ENCODE measurements at regions of chr16 and their contacts with region 1.

Region 1: DNA sequence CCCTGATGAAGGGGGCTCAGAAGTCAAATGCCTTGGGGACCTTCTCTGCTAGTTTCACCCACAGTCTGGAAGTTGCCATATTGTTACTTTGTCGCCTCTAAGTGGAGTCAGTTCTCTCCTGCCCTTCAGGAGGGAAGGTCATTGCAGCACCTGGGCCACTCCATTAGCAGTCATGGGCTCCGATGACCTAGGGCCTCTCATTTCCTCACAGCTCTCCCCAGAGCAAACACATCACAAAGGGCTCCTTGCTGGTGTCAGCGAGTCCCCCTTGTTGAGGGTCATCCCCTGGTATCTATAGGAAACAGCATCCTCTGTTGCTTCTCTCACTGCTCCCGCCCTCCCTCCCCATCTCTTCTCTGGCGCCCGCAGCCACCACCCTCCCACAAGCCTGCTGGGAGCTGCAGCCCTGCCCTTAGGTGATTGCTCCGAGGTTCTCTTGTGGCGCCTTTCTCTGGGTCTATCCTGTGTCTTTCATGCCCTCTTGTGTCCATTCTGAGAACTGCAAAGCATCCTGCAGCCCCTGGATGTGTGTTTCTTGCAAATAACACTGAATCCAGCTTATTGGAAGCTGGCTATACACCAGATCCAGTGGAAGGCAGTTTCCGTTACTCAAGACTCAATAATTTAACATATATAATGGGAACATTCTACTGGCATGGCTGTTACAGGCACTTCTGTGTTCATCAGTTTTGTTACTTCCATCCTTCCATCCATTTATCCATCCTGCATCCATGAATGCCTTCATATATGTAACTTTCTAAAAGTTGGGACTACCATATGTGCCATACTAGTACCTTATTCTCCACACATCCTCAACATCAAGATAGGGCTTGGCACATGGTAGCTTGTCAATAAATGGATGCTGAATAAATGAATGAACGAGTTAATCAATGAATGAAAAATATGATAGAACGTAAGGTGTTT is 21.2 kb downstream of the PDILT start:
- DNase-seq: peak; percentile 60
- H3K4me3 Mint-ChIP-seq: no peak overlapping the region
- H3K27ac Mint-ChIP-seq: no peak overlapping the region
- H3K4me1 Mint-ChIP-seq: no peaks in the 10 kb centered on the region
- H3K27me3 Mint-ChIP-seq: peaks cover 3% of the 10 kb centered on the region

Region 2: GRCh38 chr16:19907161-19907992 is 476.0 kb before region 1 on chr16:
- CTCF ChIA-PET with region 1: interaction called, 125 read pairs
- POLR2A ChIA-PET with region 1: interaction called, 3 read pairs
- intact Hi-C with region 1: loop called (anchors 1 kb)
- DNase-seq: peak; percentile 81
- H3K4me3 Mint-ChIP-seq: no peak overlapping the region
- H3K27ac Mint-ChIP-seq: no peak overlapping the region
- H3K4me1 Mint-ChIP-seq: peaks cover 2% of the 10 kb centered on the region
- H3K27me3 Mint-ChIP-seq: peaks cover 4% of the 10 kb centered on the region

Region 3: GRCh38 chr16:20359997-20360396 is 23.4 kb before region 1 on chr16:
- CTCF ChIA-PET with region 1: interaction called, 10 read pairs
- POLR2A ChIA-PET with region 1: no interaction called
- intact Hi-C with region 1: no loop called
- DNase-seq: no peak
- H3K4me3 Mint-ChIP-seq: no peak overlapping the region
- H3K27ac Mint-ChIP-seq: no peak overlapping the region
- H3K4me1 Mint-ChIP-seq: no peaks in the 10 kb centered on the region
- H3K27me3 Mint-ChIP-seq: peaks cover 9% of the 10 kb centered on the region

Region 4: GRCh38 chr16:20393801-20394577 is 10.6 kb after region 1 on chr16:
- CTCF ChIA-PET with region 1: interaction called, 45 read pairs
- POLR2A ChIA-PET with region 1: no interaction called
- intact Hi-C with region 1: no loop called
- DNase-seq: no peak
- H3K4me3 Mint-ChIP-seq: no peak overlapping the region
- H3K27ac Mint-ChIP-seq: no peak overlapping the region
- H3K4me1 Mint-ChIP-seq: no peaks in the 10 kb centered on the region
- H3K27me3 Mint-ChIP-seq: no peaks in the 10 kb centered on the region

Measured in activated CD4-positive, alpha-beta memory T cell treated with anti-CD3 and anti-CD28 coated beads for 36 hours (primary cell).